ENCODE measurements at regions of chr10 and their contacts with region 1.

Region 1: GRCh38 chr10:72260588-72261322 is 13.0 kb upstream of the DDIT4 start:
- DNase-seq: no peak
- H3K4me3 ChIP-seq: peak overlapping the region; percentile 31
- H3K27me3 ChIP-seq: no peaks in the 10 kb centered on the region
- CTCF ChIP-seq: 0 out of 2 replicates have a peak, but pooled peaks have one; percentile 8

Region 2: GRCh38 chr10:72176701-72177100 is 84.1 kb before region 1 on chr10:
- CTCF ChIA-PET with region 1: no interaction called
- POLR2A ChIA-PET with region 1: no interaction called
- DNase-seq: no peak
- H3K4me3 ChIP-seq: no peak overlapping the region
- H3K27me3 ChIP-seq: no peaks in the 10 kb centered on the region
- CTCF ChIP-seq: no peak

Region 3: GRCh38 chr10:72273410-72274212 is 12.9 kb after region 1 on chr10 and contains the start of gene DDIT4:
- CTCF ChIA-PET with region 1: interaction called, 10 read pairs
- POLR2A ChIA-PET with region 1: interaction called, 11 read pairs
- DNase-seq: peak; percentile 97
- H3K4me3 ChIP-seq: peak within 1 kb of the TSS; percentile 89
- H3K27me3 ChIP-seq: no peaks in the 10 kb centered on the region
- CTCF ChIP-seq: no peak
- polyA plus RNA-seq, gene DDIT4: 152 and 174 TPM in 2 replicates

Region 4: DNA sequence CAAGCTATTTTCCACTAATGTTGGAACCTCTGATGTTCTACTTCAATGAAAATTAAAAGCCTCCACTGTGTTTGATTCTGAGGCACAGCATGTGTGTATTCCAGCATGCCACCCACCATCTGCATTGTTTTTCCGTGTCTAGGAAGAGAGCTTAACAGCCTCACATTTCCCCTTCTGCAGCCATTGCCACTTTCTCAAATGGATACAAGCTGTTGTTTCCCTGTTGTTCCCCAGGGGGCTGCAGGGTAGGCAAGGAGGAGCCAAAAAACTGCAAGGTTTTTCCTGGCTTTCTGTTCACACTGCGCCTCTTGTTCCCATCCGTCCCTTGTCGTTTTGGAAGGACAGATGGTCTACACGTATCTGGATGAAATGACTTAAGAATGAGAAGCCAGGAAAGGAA is 166.2 kb after region 1 on chr10:
- CTCF ChIA-PET with region 1: no interaction called
- POLR2A ChIA-PET with region 1: no interaction called
- DNase-seq: no peak
- H3K4me3 ChIP-seq: no peak overlapping the region
- H3K27me3 ChIP-seq: no peaks in the 10 kb centered on the region
- CTCF ChIP-seq: no peak

Measured in BJ (cell line).